CD8-positive, alpha-beta T cell (primary cell): ENCODE measurements at regions of chr4 and their contacts with region 1.

Region 1: DNA sequence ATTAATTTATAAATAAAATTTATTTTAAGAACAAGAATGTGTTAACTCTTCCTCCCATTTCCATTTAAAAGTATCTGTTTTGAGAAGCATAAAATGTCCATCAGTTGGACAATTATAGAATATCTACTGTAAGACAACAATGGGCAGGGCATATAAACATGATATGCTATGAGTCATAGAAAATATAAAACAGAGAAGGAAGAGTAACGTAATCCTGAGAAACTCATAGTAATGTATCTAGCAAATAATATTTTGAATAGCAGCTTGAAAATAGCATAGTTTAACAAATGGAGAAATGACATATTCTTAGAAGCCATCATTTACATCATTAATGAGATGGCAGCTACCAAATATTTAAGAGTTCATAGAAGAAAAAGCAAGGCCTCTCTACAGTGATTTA is 820.3 kb upstream of the PCDH10 start:
- DNase-seq: no peak
- ATAC-seq: no peak
- H3K4me3 ChIP-seq: no peak overlapping the region
- H3K4me3 Mint-ChIP-seq: no peak overlapping the region
- H3K27ac ChIP-seq: no peak overlapping the region
- H3K27ac Mint-ChIP-seq: no peak overlapping the region
- H3K4me1 ChIP-seq: no peaks in the 10 kb centered on the region
- H3K4me1 Mint-ChIP-seq: no peaks in the 10 kb centered on the region
- H3K27me3 ChIP-seq: no peaks in the 10 kb centered on the region
- H3K27me3 Mint-ChIP-seq: no peaks in the 10 kb centered on the region
- CTCF ChIP-seq: no peak

Region 2: GRCh38 chr4:132297346-132297745 is 31.4 kb before region 1 on chr4:
- CTCF ChIA-PET with region 1: no interaction called
- POLR2A ChIA-PET with region 1: no interaction called
- intact Hi-C with region 1: no loop called
- DNase-seq: no peak
- ATAC-seq: no peak
- H3K4me3 ChIP-seq: no peak overlapping the region
- H3K4me3 Mint-ChIP-seq: no peak overlapping the region
- H3K27ac ChIP-seq: no peak overlapping the region
- H3K27ac Mint-ChIP-seq: no peak overlapping the region
- H3K4me1 ChIP-seq: no peaks in the 10 kb centered on the region
- H3K4me1 Mint-ChIP-seq: no peaks in the 10 kb centered on the region
- H3K27me3 ChIP-seq: no peaks in the 10 kb centered on the region
- H3K27me3 Mint-ChIP-seq: no peaks in the 10 kb centered on the region
- CTCF ChIP-seq: no peak

Region 3: DNA sequence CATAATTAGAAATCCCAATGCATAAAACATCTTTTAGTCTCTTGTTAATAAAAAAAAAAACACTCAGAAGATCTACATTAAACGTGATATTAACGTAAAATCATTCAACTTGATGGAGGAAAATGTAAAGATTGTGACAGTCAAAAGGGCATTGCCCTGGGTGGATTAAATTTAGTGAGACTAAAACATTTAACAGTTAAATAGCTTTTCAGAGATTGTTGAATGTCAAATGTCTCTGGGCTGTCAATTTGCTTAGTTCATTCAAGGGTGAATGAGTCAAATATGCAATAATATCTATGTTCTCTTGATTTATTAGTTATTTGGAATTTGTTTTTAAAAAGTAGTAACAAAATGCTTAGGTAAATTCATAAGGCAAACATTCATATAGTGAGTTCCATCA is 16.2 kb before region 1 on chr4:
- CTCF ChIA-PET with region 1: no interaction called
- POLR2A ChIA-PET with region 1: no interaction called
- intact Hi-C with region 1: loop called in 1 of 2 experiments (anchors 1 kb)
- DNase-seq: no peak
- ATAC-seq: no peak
- H3K4me3 ChIP-seq: no peak overlapping the region
- H3K4me3 Mint-ChIP-seq: no peak overlapping the region
- H3K27ac ChIP-seq: no peak overlapping the region
- H3K27ac Mint-ChIP-seq: no peak overlapping the region
- H3K4me1 ChIP-seq: no peaks in the 10 kb centered on the region
- H3K4me1 Mint-ChIP-seq: no peaks in the 10 kb centered on the region
- H3K27me3 ChIP-seq: no peaks in the 10 kb centered on the region
- H3K27me3 Mint-ChIP-seq: no peaks in the 10 kb centered on the region
- CTCF ChIP-seq: no peak